ENCODE measurements at regions of chr3 and their contacts with region 1.

Region 1: DNA sequence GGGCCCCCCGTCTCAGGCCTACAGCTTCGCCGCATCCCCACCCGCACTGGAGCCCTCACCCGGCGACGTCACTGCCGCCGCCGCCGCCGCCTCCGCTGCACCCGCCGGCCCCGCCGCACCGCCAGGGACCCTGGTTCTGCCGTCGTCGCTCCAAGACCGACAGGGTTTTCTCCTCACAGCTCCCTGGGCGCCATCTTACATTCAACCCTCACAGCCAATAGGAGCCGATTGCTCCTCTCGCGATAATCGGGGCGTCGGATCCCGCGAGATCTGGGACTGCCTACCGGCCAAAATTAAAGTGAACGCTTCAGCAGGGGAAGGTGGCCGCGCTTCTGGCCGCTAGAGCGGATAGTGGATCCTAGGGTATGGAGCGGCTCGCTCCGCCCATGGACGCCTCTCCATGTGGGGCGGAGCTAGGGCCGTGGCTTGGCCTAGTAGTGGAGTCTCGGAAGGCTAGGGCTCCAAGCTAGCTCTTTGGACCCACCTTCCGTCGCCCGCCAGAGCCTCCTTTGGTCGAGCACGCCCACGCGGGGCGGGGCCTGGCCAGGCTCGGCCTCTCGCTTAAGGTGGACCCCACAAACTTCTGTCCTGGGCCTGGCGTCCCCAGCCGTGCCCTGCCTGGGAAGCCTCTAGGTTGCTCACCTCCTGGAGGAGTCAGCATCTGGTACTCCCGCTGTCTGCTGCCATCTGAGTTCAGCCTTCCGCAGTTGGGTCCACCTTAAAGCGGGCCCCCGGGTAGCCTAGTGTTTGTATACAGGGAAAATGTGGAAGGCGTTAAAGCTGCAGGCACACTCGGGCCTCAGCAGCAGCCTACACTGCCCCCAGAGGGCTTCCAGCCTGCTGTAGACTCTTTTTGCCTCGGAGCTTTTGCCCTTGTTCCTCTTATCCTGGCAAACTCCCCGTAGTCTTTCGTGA is at the start of gene QRICH1:
- DNase-seq: peak; percentile 98
- ATAC-seq: peak; percentile 86
- H3K4me3 Mint-ChIP-seq: peak within 1 kb of the TSS; percentile 90
- H3K27ac Mint-ChIP-seq: peak within 1 kb of the TSS; percentile 94
- H3K4me1 Mint-ChIP-seq: peaks cover 33% of the 10 kb centered on the region
- H3K27me3 Mint-ChIP-seq: no peaks in the 10 kb centered on the region
- total RNA-seq, gene QRICH1: 119 to 171 TPM

Region 2: GRCh38 chr3:47164007-47164881 is 1929.9 kb before region 1 on chr3 and contains the start of gene SETD2:
- CTCF ChIA-PET with region 1: no interaction called
- POLR2A ChIA-PET with region 1: no interaction called
- intact Hi-C with region 1: loop called in 1 of 2 experiments (anchors 5 kb)
- DNase-seq: peak; percentile 94
- ATAC-seq: peak; percentile 86
- H3K4me3 Mint-ChIP-seq: peak within 1 kb of the TSS; percentile 97
- H3K27ac Mint-ChIP-seq: peak within 1 kb of the TSS; percentile 99
- H3K4me1 Mint-ChIP-seq: peaks cover 40% of the 10 kb centered on the region
- H3K27me3 Mint-ChIP-seq: no peaks in the 10 kb centered on the region
- total RNA-seq, gene SETD2: 31.8 to 35.8 TPM

Region 3: GRCh38 chr3:48188266-48189201 is 905.6 kb before region 1 on chr3 and contains the start of gene CDC25A:
- CTCF ChIA-PET with region 1: no interaction called
- POLR2A ChIA-PET with region 1: no interaction called
- intact Hi-C with region 1: loop called in 1 of 2 experiments (anchors 5 kb)
- DNase-seq: peak; percentile 98
- ATAC-seq: peak; percentile 99
- H3K4me3 Mint-ChIP-seq: peak within 1 kb of the TSS; percentile 96
- H3K27ac Mint-ChIP-seq: peak within 1 kb of the TSS; percentile 79
- H3K4me1 Mint-ChIP-seq: peaks cover 15% of the 10 kb centered on the region
- H3K27me3 Mint-ChIP-seq: peaks cover 7% of the 10 kb centered on the region
- total RNA-seq, gene CDC25A: 32.5 to 33.9 TPM

Region 4: DNA sequence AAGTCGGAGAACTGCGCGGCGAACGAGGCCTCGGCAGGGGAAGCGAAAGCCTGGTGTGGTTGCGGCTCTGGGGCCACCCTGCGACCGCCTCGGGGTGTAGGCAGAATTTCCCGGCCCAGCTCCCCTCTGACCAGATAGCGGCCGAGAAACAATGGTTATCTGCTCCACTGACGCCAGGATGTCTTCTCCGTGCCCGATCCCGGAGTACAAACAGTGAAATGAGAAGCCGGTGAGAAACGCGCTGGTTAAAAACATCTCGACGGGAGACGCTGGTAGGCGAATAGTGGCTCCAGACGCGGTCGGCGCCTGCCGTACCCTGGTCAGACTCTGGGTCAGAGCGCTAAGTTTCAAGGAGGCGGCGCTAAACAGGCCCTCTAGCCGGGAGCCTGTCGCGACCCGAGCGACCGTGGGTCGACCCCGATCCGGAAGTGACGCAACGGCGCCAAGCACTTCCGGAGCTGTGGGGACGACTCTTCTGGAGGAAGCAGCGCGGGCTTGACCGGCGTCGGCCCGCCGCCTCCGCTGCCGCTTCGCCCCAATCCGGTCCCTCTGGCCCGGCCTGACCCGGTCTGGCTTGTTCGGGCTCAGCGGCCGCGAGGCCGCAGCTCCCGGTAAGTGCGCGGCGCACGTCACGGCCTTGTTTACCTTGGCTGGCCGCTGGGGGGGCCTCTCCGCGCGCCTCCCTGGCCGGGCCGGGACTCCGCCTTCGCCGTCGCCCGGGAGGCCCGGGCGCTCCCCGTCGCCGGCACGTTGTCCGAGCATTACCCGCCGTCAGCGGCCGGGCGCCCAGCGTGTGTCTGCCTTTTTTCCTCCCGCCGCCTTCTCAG is 175.5 kb before region 1 on chr3 and contains the start of gene ARIH2:
- CTCF ChIA-PET with region 1: no interaction called
- POLR2A ChIA-PET with region 1: interaction called, 3 read pairs
- intact Hi-C with region 1: loop called (anchors 1 to 10 kb)
- DNase-seq: peak; percentile 94
- ATAC-seq: peak; percentile 75
- H3K4me3 Mint-ChIP-seq: peak within 1 kb of the TSS; percentile 90
- H3K27ac Mint-ChIP-seq: peak within 1 kb of the TSS; percentile 100
- H3K4me1 Mint-ChIP-seq: peaks cover 30% of the 10 kb centered on the region
- H3K27me3 Mint-ChIP-seq: no peaks in the 10 kb centered on the region
- total RNA-seq, gene ARIH2: 105 to 112 TPM

Region 5: GRCh38 chr3:48997714-48998641 is 96.1 kb before region 1 on chr3:
- CTCF ChIA-PET with region 1: no interaction called
- POLR2A ChIA-PET with region 1: no interaction called
- intact Hi-C with region 1: no loop called
- DNase-seq: no peak
- ATAC-seq: no peak
- H3K4me3 Mint-ChIP-seq: no peak overlapping the region
- H3K27ac Mint-ChIP-seq: no peak overlapping the region
- H3K4me1 Mint-ChIP-seq: peaks cover 10% of the 10 kb centered on the region
- H3K27me3 Mint-ChIP-seq: no peaks in the 10 kb centered on the region

Region 6: DNA sequence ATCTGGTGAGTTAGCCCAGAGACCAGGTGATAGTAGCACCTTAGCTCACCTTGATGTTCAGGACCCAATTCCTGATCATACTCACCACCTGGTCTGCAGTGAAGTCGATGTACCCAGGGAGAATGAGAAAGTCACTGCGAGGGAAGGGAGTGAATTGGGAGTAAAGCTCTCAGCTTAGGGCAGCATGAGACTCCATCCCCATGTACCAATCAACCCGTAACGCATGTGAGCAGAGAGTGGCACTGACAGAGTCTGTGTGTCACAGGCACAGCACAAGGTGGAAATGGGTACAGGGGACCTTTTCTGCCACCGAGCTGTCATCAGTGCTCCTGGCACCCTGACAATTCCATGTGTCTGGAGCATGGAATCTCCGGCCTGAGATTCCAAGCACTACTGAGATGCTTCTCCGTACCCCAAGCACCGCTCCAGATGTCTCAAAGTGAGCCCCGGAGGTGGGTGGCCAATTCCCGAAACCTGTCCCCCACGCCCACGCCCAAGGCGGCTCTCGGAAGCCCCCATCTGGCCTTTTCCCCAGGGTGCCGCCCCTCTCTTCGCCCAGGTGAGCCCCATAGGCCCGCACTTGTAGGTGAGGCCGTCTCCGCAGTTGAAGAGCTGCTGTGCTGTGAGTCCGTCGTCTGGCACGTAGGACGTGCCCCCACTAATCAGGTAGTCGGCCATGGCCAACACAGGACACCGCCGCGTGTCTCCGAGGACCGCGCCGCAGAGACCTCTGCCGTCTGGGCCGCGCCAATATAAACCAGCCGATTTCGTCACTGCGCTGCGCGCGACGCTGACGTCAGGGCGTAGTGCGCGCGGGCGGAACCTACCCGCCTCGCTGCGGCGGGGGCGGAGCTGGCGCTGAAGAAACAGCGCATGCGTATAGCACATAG is 65.2 kb before region 1 on chr3 and contains the start of gene IMPDH2:
- CTCF ChIA-PET with region 1: interaction called, 10 read pairs
- POLR2A ChIA-PET with region 1: interaction called, 31 read pairs
- intact Hi-C with region 1: loop called (anchors 1 to 2 kb)
- DNase-seq: peak; percentile 96
- ATAC-seq: peak; percentile 93
- H3K4me3 Mint-ChIP-seq: peak within 1 kb of the TSS; percentile 89
- H3K27ac Mint-ChIP-seq: peak within 1 kb of the TSS; percentile 97
- H3K4me1 Mint-ChIP-seq: peaks cover 53% of the 10 kb centered on the region
- H3K27me3 Mint-ChIP-seq: no peaks in the 10 kb centered on the region
- total RNA-seq, gene IMPDH2: 504 to 515 TPM

Region 7: GRCh38 chr3:49276475-49277382 is 182.6 kb after region 1 on chr3 and contains the start of gene C3orf62:
- CTCF ChIA-PET with region 1: no interaction called
- POLR2A ChIA-PET with region 1: no interaction called
- intact Hi-C with region 1: loop called in 1 of 2 experiments (anchors 5 kb)
- DNase-seq: peak; percentile 88
- ATAC-seq: peak; percentile 87
- H3K4me3 Mint-ChIP-seq: peak within 1 kb of the TSS; percentile 77
- H3K27ac Mint-ChIP-seq: peak within 1 kb of the TSS; percentile 87
- H3K4me1 Mint-ChIP-seq: peaks cover 30% of the 10 kb centered on the region
- H3K27me3 Mint-ChIP-seq: no peaks in the 10 kb centered on the region
- total RNA-seq, gene C3orf62: 3.7 to 3.9 TPM

Region 8: DNA sequence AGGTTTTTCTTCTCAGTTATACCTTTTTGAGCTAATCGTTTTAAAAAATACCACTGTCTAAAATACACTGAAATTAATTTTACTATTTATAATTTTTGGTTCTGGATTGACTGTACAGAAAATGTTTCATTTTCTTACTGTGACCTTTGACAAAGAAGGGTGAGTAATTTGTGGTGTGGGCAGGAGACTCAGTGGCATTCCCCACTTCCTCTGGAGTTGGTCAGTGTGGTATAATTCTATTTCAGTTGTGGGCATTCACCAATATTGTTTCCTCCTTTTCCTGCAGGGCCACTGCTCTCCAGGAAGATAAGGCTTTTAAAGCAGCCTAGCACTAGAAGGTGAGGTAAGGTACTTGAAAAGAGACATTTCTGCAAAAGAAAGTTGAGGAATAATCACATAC is 382.5 kb after region 1 on chr3:
- CTCF ChIA-PET with region 1: no interaction called
- POLR2A ChIA-PET with region 1: no interaction called
- intact Hi-C with region 1: no loop called
- DNase-seq: peak; percentile 25
- ATAC-seq: peak; percentile 55
- H3K4me3 Mint-ChIP-seq: no peak overlapping the region
- H3K27ac Mint-ChIP-seq: no peak overlapping the region
- H3K4me1 Mint-ChIP-seq: peaks cover 21% of the 10 kb centered on the region
- H3K27me3 Mint-ChIP-seq: no peaks in the 10 kb centered on the region